Activated CD8-positive, alpha-beta T cell treated with anti-CD3 and anti-CD28 coated beads, Interleukin-2, amount 10 ng/mL, durations not matched to agents 7 days and 5 days (primary cell): ENCODE measurements at regions of chr7 and their contacts with region 1.

Region 1: GRCh38 chr7:135672560-135673359 is 10.4 kb downstream of the STMP1 start:
- DNase-seq: peak; percentile 30
- ATAC-seq: peak; percentile 58
- H3K4me3 Mint-ChIP-seq: no peak overlapping the region
- H3K27ac Mint-ChIP-seq: no peak overlapping the region
- H3K4me1 Mint-ChIP-seq: no peaks in the 10 kb centered on the region
- H3K27me3 Mint-ChIP-seq: no peaks in the 10 kb centered on the region

Region 2: GRCh38 chr7:135662373-135663114 is 10.2 kb before region 1 on chr7 and contains the start of gene STMP1:
- CTCF ChIA-PET with region 1: interaction called, 79 read pairs
- POLR2A ChIA-PET with region 1: interaction called, 11 read pairs
- DNase-seq: peak; percentile 96
- ATAC-seq: peak; percentile 99
- H3K4me3 Mint-ChIP-seq: peak within 1 kb of the TSS; percentile 83
- H3K27ac Mint-ChIP-seq: peak within 1 kb of the TSS; percentile 81
- H3K4me1 Mint-ChIP-seq: peaks cover 21% of the 10 kb centered on the region
- H3K27me3 Mint-ChIP-seq: no peaks in the 10 kb centered on the region
- total RNA-seq, gene STMP1: 22.2 to 22.9 TPM

Region 3: GRCh38 chr7:135710417-135711138 is 37.8 kb after region 1 on chr7:
- CTCF ChIA-PET with region 1: interaction called, 22 read pairs
- POLR2A ChIA-PET with region 1: no interaction called
- DNase-seq: no peak
- ATAC-seq: no peak
- H3K4me3 Mint-ChIP-seq: no peak overlapping the region
- H3K27ac Mint-ChIP-seq: no peak overlapping the region
- H3K4me1 Mint-ChIP-seq: no peaks in the 10 kb centered on the region
- H3K27me3 Mint-ChIP-seq: no peaks in the 10 kb centered on the region